ENCODE measurements at regions of chr5 and their contacts with region 1.

Region 1: DNA sequence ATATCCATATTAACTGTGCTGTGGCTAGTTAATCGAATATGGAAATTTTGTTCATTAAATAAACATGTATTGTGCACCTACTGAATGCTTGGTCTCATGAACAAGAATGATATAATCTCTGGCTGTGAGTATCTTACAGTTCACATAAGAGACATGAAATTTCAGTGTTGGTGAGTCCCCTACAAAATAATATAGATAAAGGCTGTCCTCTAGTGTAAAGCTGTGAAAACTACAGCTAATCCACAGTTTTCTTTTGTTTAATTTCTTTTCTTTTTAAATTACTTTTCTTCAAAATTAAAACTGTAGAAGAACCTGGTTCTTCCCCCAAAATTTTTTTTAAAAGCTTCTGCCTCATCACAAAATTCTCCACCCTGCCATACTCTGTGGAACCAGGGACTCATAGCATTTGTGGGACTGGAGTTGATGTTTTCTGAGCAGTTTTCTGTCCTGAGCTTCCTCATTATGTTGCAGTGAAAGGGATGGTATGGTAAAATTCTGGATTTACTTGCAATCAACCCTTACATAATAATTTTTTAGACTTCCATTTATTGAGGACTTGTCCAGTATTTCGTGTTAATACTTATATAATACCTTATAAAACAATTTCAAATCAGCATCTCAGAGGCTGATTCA is 135.0 kb downstream of the STK32A start:
- H3K4me3 ChIP-seq: no peak overlapping the region
- H3K27ac ChIP-seq: no peak overlapping the region
- H3K4me1 ChIP-seq: no peaks in the 10 kb centered on the region
- CTCF ChIP-seq: peak; percentile 37; the same call in 1 of the 2 replicates

Region 2: DNA sequence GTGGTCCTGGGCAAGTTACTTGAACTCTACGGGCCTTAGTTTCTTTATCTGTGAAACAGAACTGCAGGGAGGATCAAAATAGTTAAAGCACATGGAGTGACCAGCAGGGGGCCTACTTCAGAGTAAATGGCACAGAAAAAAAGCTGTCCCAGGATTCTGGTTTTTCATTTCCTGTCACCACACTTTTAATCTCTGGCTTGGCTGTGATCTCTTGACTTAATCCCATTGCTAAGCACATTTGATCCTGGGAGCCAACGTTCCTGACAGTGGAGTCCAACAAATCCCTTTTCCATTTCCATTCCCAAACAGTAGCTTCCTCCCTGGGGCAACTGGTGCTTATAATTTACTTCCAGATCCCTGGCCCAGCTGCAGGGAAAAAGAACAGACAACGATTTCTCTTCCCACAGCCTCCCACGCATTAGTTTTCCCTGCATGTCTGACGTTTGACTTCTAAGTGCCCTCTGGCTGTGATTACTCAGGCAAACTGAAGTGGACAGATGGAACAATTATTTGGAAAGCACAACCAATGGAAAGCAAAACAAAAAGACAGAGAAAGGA is 271.5 kb before region 1 on chr5:
- CTCF ChIA-PET with region 1: interaction called, 25 read pairs
- POLR2A ChIA-PET with region 1: no interaction called
- H3K4me3 ChIP-seq: no peak overlapping the region
- H3K27ac ChIP-seq: no peak overlapping the region
- H3K4me1 ChIP-seq: no peaks in the 10 kb centered on the region
- CTCF ChIP-seq: no peak

Region 3: DNA sequence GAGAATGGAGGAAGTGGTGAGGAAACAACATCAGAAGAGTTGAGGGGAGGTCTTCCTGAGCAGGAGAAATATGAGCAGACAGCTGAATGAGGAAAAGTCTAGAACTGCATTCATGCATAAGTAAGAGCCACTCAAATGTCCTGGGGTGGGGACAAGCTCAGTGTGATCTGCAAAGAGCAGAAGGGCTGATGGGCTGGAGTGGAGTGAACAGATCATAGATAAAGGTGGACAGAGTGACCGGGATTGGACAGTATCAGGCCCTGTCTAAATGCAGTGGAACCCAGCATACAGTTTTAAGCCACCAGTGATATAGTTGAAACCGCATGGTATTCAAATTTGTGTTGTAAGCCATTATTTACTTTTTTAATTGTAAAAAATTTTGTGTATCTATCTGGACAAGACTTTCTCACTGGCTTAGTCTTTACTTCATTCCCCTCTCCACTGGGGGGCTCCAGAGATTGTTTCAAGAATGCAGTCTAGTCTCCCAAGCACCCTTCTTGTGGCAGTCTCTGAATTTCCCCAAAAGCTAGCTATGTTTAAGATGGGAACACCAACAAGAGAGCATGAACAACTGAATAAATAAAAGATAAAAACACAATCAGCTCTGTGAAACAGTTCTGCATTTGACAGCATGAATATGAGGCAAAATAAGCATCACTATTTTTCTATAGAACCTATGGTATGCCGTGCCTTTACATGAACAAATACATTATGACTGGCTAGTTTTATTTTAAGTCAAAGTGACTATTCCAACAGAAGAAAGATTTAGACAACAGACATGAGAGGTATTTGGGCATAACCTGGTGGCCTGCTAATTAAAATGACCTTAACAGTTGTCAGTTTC is 145.7 kb before region 1 on chr5:
- CTCF ChIA-PET with region 1: interaction called, 51 read pairs
- POLR2A ChIA-PET with region 1: no interaction called
- H3K4me3 ChIP-seq: no peak overlapping the region
- H3K27ac ChIP-seq: no peak overlapping the region
- H3K4me1 ChIP-seq: no peaks in the 10 kb centered on the region
- CTCF ChIP-seq: no peak

Region 4: GRCh38 chr5:147397616-147398015 is 27.8 kb after region 1 on chr5:
- CTCF ChIA-PET with region 1: interaction called, 10 read pairs
- POLR2A ChIA-PET with region 1: no interaction called
- H3K4me3 ChIP-seq: no peak overlapping the region
- H3K27ac ChIP-seq: no peak overlapping the region
- H3K4me1 ChIP-seq: no peaks in the 10 kb centered on the region
- CTCF ChIP-seq: no peak

Region 5: DNA sequence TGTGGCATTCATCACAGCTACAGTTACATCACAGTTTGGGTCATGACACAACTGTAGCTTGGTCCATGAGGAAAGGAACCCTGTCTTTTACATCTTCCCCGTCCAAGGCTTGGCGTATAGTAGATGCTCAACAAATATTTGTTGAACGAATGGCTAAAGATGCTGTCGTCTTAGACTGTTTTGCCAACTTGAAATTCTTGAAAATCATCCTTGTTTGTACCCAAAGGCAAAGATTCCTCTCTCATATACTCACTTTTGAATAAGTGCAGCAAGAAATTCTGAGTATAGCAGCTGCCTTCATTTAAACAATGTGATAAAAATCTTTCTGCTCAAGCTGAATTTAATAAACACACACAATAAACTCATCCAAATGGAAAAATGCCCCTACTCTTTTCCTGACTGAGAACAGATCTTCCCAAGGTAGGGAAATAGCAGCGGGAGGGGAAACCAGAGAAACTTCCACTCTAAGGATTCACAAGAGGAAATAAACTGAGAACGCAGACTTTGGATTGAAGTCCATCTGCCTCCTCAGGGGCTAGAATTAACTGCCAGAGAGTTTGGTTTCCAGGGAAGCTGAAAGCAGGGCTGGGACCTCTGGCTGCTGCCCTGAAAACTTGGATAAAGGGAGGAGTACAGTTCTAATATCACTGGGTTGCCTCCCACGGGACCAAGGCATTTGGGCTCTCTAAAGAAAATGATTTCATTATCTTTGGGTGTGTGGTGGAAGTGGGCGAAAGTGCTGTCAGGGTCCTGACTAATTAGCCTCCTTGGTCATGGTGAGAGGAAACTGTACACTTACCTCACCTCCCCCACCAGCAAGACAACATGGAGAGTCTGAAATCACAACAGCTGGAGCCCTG is 40.9 kb after region 1 on chr5:
- CTCF ChIA-PET with region 1: no interaction called
- POLR2A ChIA-PET with region 1: no interaction called
- H3K4me3 ChIP-seq: no peak overlapping the region
- H3K27ac ChIP-seq: no peak overlapping the region
- H3K4me1 ChIP-seq: no peaks in the 10 kb centered on the region
- CTCF ChIP-seq: no peak